Right ventricle myocardium inferior (tissue), 1 donor: ENCODE measurements at regions of chr2 and their contacts with region 1.

Region 1: DNA sequence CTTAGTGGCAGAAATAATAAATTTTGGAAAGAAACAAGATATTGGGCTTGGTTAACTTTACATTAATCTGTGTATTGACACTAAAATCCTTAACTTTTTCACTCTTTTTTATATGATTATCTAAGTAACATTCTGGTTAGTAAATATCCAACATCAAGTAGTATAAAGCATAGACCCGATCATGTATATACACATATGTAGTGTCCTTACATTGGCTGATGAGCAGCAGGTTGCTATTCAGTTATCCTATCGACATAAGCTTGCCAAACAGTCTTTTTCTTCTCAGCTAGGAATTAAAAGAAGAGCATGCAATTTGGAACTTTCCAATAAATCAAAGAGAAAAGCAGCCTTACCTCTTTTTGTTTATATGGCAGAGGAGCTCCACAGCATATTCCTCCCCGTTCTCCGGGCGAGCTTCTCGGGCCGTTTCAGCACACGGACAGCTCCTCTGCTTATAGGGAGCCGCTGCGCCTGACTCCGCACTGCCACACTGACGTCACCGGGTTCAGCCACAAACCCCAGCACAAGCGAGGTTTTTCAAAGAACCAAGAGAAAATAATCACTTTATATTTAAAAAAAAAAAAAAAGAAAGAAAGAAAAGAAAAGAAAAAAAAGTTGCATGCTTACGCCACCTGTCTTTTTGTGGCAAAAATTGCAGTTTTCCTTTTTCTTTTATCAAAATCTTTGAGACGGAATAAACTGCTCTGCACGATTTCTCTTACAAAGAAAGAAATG is at the start of gene SCG2:
- DNase-seq: peak; percentile 84
- ATAC-seq: peak; percentile 88
- total RNA-seq, gene SCG2: not detected

Region 2: GRCh38 chr2:223442847-223443246 is 159.3 kb before region 1 on chr2:
- intact Hi-C with region 1: no loop called
- DNase-seq: no peak
- ATAC-seq: no peak

Region 3: DNA sequence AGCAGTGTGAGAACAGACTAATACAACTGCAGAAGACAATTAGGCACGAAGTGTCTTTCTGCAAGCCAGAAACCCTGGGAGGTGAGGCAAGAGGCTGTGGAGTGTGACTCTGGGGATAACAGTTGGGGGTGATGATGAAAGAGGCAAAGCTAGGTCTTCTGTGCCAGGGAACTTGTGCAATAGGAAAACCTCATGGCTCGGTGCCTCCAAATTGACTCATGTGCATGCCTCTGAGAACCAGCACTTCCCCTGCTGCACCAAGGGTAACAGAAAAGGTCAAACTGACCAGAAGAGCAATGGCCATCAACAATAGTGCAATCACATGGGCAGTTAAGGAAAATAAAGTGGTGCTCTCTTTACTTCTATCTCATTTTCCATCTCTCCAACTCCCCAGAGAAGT is 136.3 kb before region 1 on chr2:
- intact Hi-C with region 1: loop called (anchors 10 kb)
- DNase-seq: peak; percentile 76
- ATAC-seq: peak; percentile 88